ENCODE measurements at regions of chr3 and their contacts with region 1.

Region 1: DNA sequence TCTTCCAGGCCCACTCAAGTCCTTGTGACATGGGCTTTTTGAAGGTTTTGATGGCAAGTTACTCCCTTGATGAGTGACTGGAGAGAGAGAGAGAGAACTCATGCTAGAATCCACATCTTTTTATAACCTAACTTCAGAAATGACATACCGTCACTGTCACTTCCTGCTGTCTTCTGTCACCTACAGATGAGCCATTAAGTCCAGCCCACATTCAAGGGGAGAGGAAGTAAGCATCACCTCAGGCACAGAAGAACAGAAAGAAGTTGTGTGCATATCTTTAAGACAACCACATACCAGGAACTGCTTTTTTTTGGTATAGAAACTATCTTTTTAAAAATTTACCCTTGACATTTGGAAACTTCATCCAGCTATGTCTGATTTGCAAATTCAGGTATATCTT is 16.6 kb upstream of the TXNRD3 start:
- DNase-seq: no peak
- ATAC-seq: no peak
- H3K4me3 ChIP-seq: no peak overlapping the region
- H3K27ac ChIP-seq: no peak overlapping the region
- H3K4me1 ChIP-seq: no peaks in the 10 kb centered on the region
- H3K27me3 ChIP-seq: no peaks in the 10 kb centered on the region
- CTCF ChIP-seq: no peak

Region 2: GRCh38 chr3:128041344-128041743 is 1369.8 kb after region 1 on chr3:
- CTCF ChIA-PET with region 1: no interaction called
- POLR2A ChIA-PET with region 1: interaction called, 21 read pairs
- intact Hi-C with region 1: no loop called
- DNase-seq: no peak
- ATAC-seq: no peak
- H3K4me3 ChIP-seq: no peak overlapping the region
- H3K27ac ChIP-seq: no peak overlapping the region
- H3K4me1 ChIP-seq: no peaks in the 10 kb centered on the region
- H3K27me3 ChIP-seq: no peaks in the 10 kb centered on the region
- CTCF ChIP-seq: no peak